Aorta (tissue), 5 donors: ENCODE measurements at regions of chr7 and their contacts with region 1.

Region 1: GRCh38 chr7:16918288-16918895 is 36.6 kb upstream of the AGR3 start:
- DNase-seq: no peak
- ATAC-seq: no peak
- H3K4me3 ChIP-seq: no peak overlapping the region
- H3K27ac ChIP-seq: no peak overlapping the region
- H3K4me1 ChIP-seq: no peaks in the 10 kb centered on the region
- H3K27me3 ChIP-seq: no peaks in the 10 kb centered on the region

Region 2: DNA sequence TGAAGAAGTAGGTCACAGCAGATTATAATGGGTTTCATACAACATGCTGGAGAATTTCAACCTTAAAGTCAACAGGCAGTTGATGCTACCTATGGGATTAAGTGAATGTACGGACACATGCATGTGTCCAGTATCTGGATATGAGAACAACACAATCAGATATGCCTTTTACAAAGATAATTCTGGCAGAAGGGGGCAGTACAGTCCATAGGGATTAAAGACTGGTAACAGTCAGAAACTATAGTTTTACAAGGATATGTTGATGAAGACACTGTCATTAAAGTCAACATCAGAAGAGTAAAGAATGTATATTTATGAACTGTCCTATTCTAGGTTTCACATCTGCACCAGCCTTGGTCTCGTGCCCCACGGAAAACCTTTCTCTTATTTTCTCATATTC is 314.3 kb before region 1 on chr7:
- intact Hi-C with region 1: loop called in 1 of 2 experiments (anchors 10 kb)
- DNase-seq: no peak
- ATAC-seq: no peak
- H3K4me3 ChIP-seq: no peak overlapping the region
- H3K27ac ChIP-seq: no peak overlapping the region
- H3K4me1 ChIP-seq: no peaks in the 10 kb centered on the region
- H3K27me3 ChIP-seq: no peaks in the 10 kb centered on the region

Region 3: GRCh38 chr7:16695621-16696237 is 222.7 kb before region 1 on chr7:
- intact Hi-C with region 1: loop called (anchors 2 to 5 kb)
- DNase-seq: no peak
- ATAC-seq: no peak
- H3K4me3 ChIP-seq: no peak overlapping the region
- H3K27ac ChIP-seq: no peak overlapping the region
- H3K4me1 ChIP-seq: peaks cover 4 to 5% of the 10 kb centered on the region in 2 donors
- H3K27me3 ChIP-seq: no peaks in the 10 kb centered on the region

Region 4: GRCh38 chr7:16801111-16801542 is 117.3 kb before region 1 on chr7:
- intact Hi-C with region 1: loop called (anchors 2 to 5 kb)
- DNase-seq: no peak
- ATAC-seq: no peak
- H3K4me3 ChIP-seq: no peak overlapping the region
- H3K27ac ChIP-seq: no peak overlapping the region
- H3K4me1 ChIP-seq: no peaks in the 10 kb centered on the region
- H3K27me3 ChIP-seq: no peaks in the 10 kb centered on the region